GM13976 (cell line): ENCODE measurements at regions of chr1 and their contacts with region 1.

Region 1: GRCh38 chr1:28091043-28091781 is 2.8 kb upstream of the EYA3 start:
- DNase-seq: peak; percentile 69
- CTCF ChIP-seq: peak; percentile 73

Region 2: DNA sequence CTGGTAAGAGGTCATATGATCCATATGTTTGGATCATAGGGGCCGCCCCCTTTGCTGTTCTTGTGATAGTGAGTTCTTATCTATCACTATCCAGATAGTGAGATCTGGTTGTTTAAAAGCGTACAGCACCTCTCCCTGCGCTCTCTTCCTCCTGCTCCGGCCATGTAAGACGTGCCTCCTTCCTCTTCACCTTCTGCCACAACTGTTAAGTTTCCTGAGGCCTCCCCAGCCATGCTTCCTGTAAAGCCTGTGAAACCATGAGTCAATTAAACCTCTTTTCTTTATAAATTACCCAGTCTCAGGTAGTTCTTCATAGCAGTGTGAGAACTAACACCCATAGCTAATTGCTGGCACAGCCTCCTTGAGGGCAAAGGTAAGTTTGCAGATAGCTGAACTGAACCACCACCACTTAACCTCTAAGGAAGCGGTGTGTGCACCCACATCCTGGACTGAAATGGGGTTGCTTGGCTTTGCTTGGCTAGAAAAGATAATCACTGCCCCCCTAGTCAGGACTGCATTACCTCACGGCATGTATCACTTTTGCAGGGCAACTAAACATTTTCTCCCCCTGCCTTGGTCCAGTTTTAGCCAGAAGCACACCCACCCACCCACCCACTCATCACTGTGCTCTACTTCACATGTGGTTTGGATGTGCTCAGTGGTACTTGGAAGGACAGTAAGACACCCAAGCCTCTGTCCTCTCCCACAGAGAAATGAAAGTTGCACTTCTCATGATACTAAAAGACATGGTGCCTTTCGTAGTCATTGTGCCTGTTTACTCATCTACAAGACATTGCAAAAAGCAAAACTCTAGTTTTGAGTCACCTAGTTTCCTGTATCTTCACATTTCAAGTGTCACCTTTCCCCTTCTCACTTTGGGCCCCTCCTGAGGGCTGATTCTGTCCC is 108.4 kb after region 1 on chr1:
- in situ Hi-C with region 1: loop called (anchors 5 kb)
- DNase-seq: peak; percentile 86
- CTCF ChIP-seq: no peak